Aorta (tissue), 5 donors: ENCODE measurements at regions of chr11 and their contacts with region 1.

Region 1: GRCh38 chr11:113189909-113190667 is 124.3 kb upstream of the TTC12 start:
- DNase-seq: peak; percentile 75 to 81
- ATAC-seq: peak; percentile 54
- H3K4me3 ChIP-seq: no peak overlapping the region
- H3K27ac ChIP-seq: peak overlapping the region in 1 of 2 donors; percentile 42
- H3K4me1 ChIP-seq: peaks cover 7 to 8% of the 10 kb centered on the region in 2 donors
- H3K27me3 ChIP-seq: no peaks in the 10 kb centered on the region

Region 2: GRCh38 chr11:113113801-113114706 is 76.0 kb before region 1 on chr11:
- intact Hi-C with region 1: loop called in 1 of 2 experiments (anchors 10 kb)
- DNase-seq: peak; percentile 65 to 77
- ATAC-seq: peak; percentile 89
- H3K4me3 ChIP-seq: peak overlapping the region in 1 of 2 donors; percentile 5
- H3K27ac ChIP-seq: peak overlapping the region; percentile 71 to 93
- H3K4me1 ChIP-seq: peaks cover 4 to 7% of the 10 kb centered on the region in 2 donors
- H3K27me3 ChIP-seq: no peaks in the 10 kb centered on the region

Region 3: GRCh38 chr11:113167595-113167994 is 22.5 kb before region 1 on chr11:
- intact Hi-C with region 1: no loop called
- DNase-seq: no peak
- ATAC-seq: no peak
- H3K4me3 ChIP-seq: no peak overlapping the region
- H3K27ac ChIP-seq: no peak overlapping the region
- H3K4me1 ChIP-seq: peaks cover 0 to 5% of the 10 kb centered on the region in 2 donors
- H3K27me3 ChIP-seq: no peaks in the 10 kb centered on the region